B cell (primary cell): ENCODE measurements at regions of chr14 and their contacts with region 1.

Region 1: DNA sequence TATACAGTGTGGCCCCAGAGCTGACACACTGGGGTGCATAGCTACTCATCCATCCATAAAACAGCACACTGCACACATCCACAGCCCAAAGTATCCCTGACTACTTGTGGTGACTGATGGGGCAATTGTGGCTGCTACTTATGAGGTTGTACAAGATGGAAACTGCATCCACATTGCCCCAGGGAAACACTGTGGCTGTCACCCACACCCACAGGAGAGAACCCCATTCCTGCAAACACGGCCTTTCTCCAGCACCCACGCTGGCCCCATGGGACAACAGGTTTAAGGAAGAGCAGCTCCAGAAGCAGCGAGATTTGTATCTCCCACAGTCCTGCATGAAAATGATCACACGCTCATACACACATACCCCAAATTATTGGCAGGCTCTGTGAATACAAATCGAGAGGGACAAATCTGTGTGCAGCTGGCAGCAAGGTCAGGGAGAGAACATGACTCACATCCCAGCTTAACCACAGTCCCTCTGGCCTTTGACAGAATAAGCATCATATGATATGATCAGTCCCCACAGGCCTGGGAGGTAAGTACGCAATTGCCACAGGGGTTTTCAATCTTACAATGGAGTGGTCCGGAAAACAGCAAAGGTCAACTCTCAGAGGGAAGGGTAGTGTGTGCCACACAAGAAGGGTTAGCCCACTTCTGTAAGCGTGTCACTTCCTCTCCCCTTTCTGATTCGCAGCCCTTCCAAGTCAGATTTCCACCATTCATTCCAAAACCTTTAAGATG is 61.9 kb downstream of the ESR2 start:
- DNase-seq: peak; percentile 31
- ATAC-seq: peak; percentile 7
- H3K4me3 ChIP-seq: no peak overlapping the region
- H3K4me3 Mint-ChIP-seq: peak overlapping the region; percentile 73
- H3K27ac ChIP-seq: no peak overlapping the region
- H3K27ac Mint-ChIP-seq: peak overlapping the region; percentile 96
- H3K4me1 ChIP-seq: peaks cover 49 to 53% of the 10 kb centered on the region in 2 donors
- H3K4me1 Mint-ChIP-seq: peaks cover 56% of the 10 kb centered on the region
- H3K27me3 ChIP-seq: no peaks in the 10 kb centered on the region
- H3K27me3 Mint-ChIP-seq: no peaks in the 10 kb centered on the region
- CTCF ChIP-seq: no peak

Region 2: DNA sequence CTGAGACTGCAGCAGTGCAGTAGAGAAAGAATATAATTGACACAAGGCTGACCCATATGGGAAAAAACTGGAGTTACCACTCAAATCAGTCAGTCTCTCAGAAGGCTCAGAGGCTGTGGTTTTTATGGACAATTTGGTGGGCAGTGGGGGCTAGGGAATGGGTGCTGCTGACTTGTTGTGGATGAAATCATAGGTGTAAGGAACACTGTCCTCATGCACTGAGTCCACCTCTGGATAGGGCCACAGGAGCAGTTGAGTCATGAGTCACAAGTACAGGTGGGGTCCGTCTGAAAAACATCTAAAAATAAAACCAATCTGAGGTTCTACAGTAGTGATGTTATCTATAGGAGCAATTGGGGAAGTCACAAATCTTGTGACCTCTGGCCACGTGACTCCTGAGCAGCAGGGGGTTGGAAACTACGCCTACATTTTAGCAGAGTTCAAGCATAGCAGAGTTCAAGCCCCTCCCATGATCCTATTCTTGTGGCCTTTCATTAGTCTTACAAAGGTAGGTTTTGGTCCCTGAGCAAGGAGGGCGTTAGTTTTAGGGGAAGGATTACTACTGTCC is 486.3 kb before region 1 on chr14:
- CTCF ChIA-PET with region 1: no interaction called
- POLR2A ChIA-PET with region 1: interaction called, 8 read pairs
- intact Hi-C with region 1: loop called (anchors 1 kb)
- DNase-seq: peak; percentile 87
- ATAC-seq: peak; percentile 75
- H3K4me3 ChIP-seq: peak overlapping the region in 2 of 5 experiments; percentile 1 to 41
- H3K4me3 Mint-ChIP-seq: peak overlapping the region; percentile 76
- H3K27ac ChIP-seq: peak overlapping the region; percentile 94 to 97
- H3K27ac Mint-ChIP-seq: peak overlapping the region; percentile 99
- H3K4me1 ChIP-seq: peaks cover 39 to 54% of the 10 kb centered on the region in 2 donors
- H3K4me1 Mint-ChIP-seq: peaks cover 40% of the 10 kb centered on the region
- H3K27me3 ChIP-seq: no peaks in the 10 kb centered on the region
- H3K27me3 Mint-ChIP-seq: no peaks in the 10 kb centered on the region
- CTCF ChIP-seq: no peak

Region 3: DNA sequence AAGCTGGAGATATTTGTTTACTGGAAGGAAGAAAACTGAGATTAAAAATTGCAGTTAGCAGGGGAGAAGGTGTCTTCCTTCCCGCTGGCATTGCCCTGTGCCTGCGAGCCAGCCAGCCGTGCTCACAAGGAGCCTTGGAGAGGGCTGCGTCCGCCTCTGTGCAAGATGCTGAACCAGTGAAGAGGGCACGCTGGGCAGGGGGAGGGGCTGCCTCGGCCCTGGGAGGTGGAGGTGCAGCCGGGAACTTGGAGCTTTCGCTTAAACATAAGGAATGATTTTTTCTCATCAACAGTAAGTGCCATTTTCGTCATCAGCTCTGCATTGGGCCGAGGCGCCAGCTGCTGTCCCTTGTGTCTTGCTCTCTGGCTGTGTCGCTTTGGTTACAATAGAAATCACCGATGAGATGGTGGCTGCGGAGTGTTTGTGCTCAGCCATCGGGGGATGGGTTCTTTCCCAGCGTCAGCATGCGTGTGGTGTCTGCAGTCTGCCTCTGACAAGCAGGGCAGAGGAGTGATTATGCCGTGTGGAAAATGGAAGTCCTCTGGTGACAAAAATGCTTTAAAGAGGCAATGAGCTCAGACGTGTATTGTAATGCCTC is 35.4 kb before region 1 on chr14:
- CTCF ChIA-PET with region 1: interaction called, 13 read pairs
- POLR2A ChIA-PET with region 1: interaction called, 21 read pairs
- intact Hi-C with region 1: loop called (anchors 1 kb)
- DNase-seq: peak; percentile 84
- ATAC-seq: peak; percentile 82
- H3K4me3 ChIP-seq: peak overlapping the region in 4 of 5 experiments; percentile 40 to 53 (median 46)
- H3K4me3 Mint-ChIP-seq: peak overlapping the region; percentile 90
- H3K27ac ChIP-seq: peak overlapping the region; percentile 94 to 98
- H3K27ac Mint-ChIP-seq: peak overlapping the region; percentile 94
- H3K4me1 ChIP-seq: peaks cover 51 to 53% of the 10 kb centered on the region in 2 donors
- H3K4me1 Mint-ChIP-seq: peaks cover 57% of the 10 kb centered on the region
- H3K27me3 ChIP-seq: no peaks in the 10 kb centered on the region
- H3K27me3 Mint-ChIP-seq: no peaks in the 10 kb centered on the region
- CTCF ChIP-seq: no peak

Region 4: GRCh38 chr14:64218344-64219240 is 13.7 kb before region 1 on chr14:
- CTCF ChIA-PET with region 1: interaction called, 13 read pairs
- POLR2A ChIA-PET with region 1: interaction called, 22 read pairs
- intact Hi-C with region 1: loop called (anchors 1 kb)
- DNase-seq: peak; percentile 30
- ATAC-seq: no peak
- H3K4me3 ChIP-seq: no peak overlapping the region
- H3K4me3 Mint-ChIP-seq: peak overlapping the region; percentile 61
- H3K27ac ChIP-seq: peak overlapping the region in 1 of 2 donors; percentile 19
- H3K27ac Mint-ChIP-seq: peak overlapping the region; percentile 78
- H3K4me1 ChIP-seq: peaks cover 57 to 61% of the 10 kb centered on the region in 2 donors
- H3K4me1 Mint-ChIP-seq: peaks cover 64% of the 10 kb centered on the region
- H3K27me3 ChIP-seq: no peaks in the 10 kb centered on the region
- H3K27me3 Mint-ChIP-seq: no peaks in the 10 kb centered on the region
- CTCF ChIP-seq: no peak

Region 5: DNA sequence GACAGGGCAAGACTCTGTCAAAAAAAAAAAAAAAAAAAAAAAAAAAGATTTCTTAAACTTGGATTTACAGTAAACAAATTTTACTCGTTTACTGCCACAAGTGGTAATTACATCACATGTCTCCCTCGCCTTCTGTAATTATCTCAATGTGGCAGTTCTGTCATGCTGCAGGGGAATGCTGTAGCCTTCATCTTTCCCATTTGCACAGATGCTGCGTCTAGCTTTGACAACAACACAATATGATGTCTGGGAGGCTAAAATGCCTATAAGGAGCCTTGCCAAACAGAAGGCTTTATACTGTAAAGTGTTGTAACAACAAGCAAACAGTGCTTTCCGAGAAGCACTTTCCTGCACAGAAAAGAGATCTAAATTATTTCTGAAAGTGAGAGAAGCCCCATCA is 13.2 kb after region 1 on chr14:
- CTCF ChIA-PET with region 1: interaction called, 6 read pairs
- POLR2A ChIA-PET with region 1: interaction called, 10 read pairs
- intact Hi-C with region 1: no loop called
- DNase-seq: no peak
- ATAC-seq: no peak
- H3K4me3 ChIP-seq: no peak overlapping the region
- H3K4me3 Mint-ChIP-seq: no peak overlapping the region
- H3K27ac ChIP-seq: no peak overlapping the region
- H3K27ac Mint-ChIP-seq: no peak overlapping the region
- H3K4me1 ChIP-seq: no peaks in the 10 kb centered on the region
- H3K4me1 Mint-ChIP-seq: peaks cover 2% of the 10 kb centered on the region
- H3K27me3 ChIP-seq: no peaks in the 10 kb centered on the region
- H3K27me3 Mint-ChIP-seq: no peaks in the 10 kb centered on the region
- CTCF ChIP-seq: no peak